ENCODE measurements at regions of chr11 and their contacts with region 1.

Region 1: DNA sequence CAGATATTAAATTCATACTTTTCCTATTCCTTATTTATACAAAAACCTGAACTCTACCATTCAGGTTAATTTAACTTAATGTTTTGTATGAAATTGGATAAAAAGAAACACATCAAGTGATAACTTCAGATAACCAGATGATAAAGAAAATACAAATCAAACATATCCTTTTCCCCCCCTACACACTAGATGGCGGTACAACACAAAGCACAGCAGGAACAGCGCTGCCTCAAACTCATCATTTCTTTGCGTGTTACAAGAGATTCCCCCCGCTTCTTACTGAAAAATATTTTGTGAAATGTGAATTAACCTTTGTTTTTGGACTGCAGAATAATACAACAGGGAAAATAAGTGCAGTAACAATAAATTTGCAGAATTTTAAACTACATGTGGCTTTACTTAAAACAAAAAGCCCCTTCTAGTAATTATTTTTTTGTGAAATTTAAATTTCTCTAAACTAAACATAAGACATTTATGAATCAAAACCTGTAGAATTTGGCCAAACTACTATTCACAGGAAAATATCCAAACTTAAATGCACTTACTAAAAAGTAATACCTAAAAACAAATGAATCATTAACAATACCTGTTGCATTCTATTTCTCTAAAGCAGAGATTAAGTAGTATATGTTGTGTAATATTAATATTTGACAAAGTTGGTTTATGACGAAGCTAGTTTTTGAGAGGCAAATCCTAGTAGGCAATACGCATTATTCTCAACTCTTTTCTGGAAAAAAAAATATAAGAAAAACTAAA is 74.4 kb downstream of the ARHGAP32 start:
- DNase-seq: peak; percentile 50 to 70
- H3K4me3 ChIP-seq: no peak overlapping the region
- H3K4me1 ChIP-seq: no peaks in the 10 kb centered on the region
- H3K27me3 ChIP-seq: no peaks in the 10 kb centered on the region

Region 2: GRCh38 chr11:129728575-129728974 is 610.8 kb after region 1 on chr11:
- in situ Hi-C with region 1: loop called (anchors 25 kb)
- DNase-seq: no peak
- H3K4me3 ChIP-seq: no peak overlapping the region
- H3K4me1 ChIP-seq: no peaks in the 10 kb centered on the region
- H3K27me3 ChIP-seq: peaks cover 8% of the 10 kb centered on the region; the same call in 1 of the 2 replicates

Measured in HAP-1 (cell line).